ENCODE measurements at regions of chr1 and their contacts with region 1.

Region 1: DNA sequence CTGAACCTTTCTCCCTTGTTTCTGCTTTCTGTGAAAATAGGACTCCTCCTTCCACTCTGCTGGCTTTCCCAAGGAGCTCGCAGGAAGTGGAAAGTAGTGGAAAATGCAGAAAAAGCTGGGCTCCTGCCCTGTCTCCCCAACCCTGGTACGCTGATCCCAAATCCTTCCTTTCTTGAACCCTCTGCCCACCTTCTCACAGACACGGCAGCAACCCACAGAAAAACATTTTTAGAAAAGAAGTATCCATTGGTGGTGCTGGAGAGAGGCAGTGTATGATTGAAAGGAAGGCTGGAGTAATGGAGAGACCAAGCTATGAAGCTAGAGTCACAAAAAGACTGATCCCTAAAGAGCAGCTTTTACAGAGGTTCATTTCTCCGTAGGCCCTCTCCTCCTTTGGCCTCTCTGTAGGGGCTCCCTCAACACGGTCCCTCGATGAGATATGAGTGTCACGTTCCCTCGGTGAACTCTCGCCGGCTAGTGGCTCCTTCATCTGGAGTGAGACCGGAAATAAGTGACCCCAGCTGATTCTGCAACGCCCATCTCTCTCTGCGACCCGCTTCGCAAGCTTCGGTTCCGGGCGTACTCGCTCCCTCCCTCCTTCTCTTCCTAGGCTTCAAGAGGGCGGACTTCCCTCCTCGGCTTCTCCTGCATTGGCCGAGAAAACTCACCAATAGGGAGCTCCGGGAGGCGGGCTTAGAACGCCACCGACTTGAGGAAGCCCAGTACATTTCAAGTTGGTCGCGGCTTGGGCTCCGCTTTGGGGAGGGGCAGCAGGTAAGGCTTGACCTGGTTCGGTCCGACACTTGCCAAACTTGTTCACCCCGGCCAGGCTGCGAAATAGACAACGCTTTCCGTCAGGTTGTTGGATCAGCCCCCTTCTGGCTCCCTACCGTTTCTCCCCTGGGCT is at the starts of genes ANKRD34A and POLR3GL:
- DNase-seq: peak; percentile 98
- H3K4me3 Mint-ChIP-seq: peak within 1 kb of the TSS; percentile 97
- H3K27ac Mint-ChIP-seq: peak within 1 kb of the TSS; percentile 84
- H3K4me1 Mint-ChIP-seq: peaks cover 35% of the 10 kb centered on the region
- H3K27me3 Mint-ChIP-seq: no peaks in the 10 kb centered on the region
- total RNA-seq, gene ANKRD34A: 3.7 to 4.3 TPM
- total RNA-seq, gene POLR3GL: 32.0 to 34.0 TPM

Region 2: DNA sequence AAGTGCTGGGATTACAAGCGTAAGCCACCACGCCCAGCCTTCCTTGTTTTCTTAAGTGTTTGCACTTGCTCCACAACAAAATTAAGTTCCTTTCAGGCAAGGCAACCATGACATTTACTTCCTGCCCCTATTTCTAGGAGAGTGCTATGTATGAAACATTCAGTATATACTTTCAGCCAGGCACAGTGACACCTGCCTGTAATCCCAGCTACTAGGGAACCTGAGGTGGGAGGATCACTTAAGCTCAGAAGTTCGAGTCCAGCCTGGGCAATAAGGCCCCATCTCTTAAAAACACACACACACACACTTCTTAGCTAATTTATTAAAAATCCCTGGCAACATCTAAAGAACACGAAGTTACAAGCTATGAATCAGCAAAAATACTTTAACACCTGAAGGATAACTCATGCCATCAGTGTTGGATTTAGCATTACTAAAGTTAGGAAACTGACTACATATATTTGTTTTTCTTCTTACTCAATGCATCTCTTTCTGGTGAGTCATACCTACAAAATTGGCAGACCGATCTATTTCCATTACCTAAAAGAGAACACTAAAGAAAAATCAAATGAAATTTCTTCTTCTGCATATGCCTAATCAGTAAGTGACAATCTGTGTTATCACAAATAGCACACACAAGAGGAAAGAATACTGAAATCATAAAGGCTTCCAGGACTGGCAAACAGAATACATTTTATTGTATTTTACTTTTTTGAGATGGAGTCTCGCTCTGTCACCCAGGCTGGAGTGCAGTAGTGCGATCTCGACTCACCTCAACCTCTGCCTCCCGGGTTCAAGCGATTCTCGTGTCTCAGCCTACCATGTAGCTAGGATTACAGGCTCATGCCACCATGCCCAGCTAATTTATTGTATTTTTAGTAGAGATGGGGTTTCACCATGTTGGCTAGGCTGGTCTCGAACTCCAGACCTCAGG is 181.8 kb before region 1 on chr1:
- CTCF ChIA-PET with region 1: no interaction called
- intact Hi-C with region 1: no loop called
- DNase-seq: no peak
- H3K4me3 Mint-ChIP-seq: no peak overlapping the region
- H3K27ac Mint-ChIP-seq: no peak overlapping the region
- H3K4me1 Mint-ChIP-seq: peaks cover 30% of the 10 kb centered on the region
- H3K27me3 Mint-ChIP-seq: no peaks in the 10 kb centered on the region

Region 3: DNA sequence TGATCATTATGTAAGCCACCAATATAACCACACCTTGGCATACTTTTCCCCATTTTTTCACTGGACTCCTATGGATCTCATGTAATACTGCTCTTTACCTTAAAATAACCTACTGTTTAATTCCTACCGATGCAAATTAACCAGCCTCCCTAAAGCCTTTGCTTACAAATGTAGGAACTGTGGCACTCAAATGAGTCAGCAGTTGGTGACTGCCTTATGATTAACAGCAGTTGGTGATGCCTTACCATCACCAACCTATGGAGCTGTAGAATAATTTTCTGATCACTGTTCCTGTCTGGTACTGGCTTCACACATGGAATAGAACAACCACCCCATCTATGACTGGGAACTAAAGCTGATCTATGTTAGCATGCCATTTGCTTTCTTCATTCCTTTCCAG is 126.6 kb before region 1 on chr1:
- CTCF ChIA-PET with region 1: no interaction called
- intact Hi-C with region 1: no loop called
- DNase-seq: no peak
- H3K4me3 Mint-ChIP-seq: no peak overlapping the region
- H3K27ac Mint-ChIP-seq: peak overlapping the region; percentile 30
- H3K4me1 Mint-ChIP-seq: no peaks in the 10 kb centered on the region
- H3K27me3 Mint-ChIP-seq: no peaks in the 10 kb centered on the region

Region 4: DNA sequence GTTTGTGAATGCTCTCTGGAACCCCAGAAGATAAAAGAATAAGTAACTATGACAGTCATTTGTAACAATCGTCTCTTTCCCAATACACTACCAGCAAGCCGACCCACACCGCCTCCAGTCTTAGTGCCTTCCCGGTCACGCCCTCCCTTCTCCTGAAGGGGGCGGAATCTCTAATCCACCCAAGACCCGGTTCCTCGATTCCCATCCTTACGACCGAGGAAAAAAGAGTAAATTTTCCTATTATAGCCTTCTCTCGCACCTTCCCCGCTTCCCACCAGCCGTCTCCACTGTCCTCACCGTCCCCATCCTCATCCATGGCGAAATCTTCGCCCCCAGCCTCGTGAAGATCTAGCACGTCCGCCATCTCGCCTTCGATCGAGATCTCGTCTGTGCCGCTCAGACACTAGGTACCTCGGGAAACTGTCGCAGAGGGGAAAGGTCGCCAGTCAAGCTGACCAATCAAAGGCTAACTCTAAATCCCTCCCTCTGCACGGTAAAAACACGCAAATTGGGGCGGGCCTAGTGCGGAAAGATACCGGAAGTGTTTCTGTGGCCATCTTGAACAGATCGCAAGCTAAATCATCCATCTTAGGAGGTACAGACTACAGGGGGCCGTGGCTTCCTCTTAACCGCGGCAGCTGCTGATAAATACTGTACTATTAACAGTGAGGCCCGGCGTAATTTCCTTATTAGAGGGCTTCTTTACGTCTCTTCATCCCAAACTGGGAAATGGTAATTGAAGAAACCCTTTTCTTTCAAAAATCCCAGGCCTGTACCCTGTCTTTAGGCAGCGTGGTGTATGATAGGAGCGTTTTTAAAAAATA is 37.0 kb before region 1 on chr1 and contains the start of gene RBM8A:
- CTCF ChIA-PET with region 1: interaction called, 14 read pairs
- intact Hi-C with region 1: loop called (anchors 1 kb)
- DNase-seq: peak; percentile 99
- H3K4me3 Mint-ChIP-seq: no peak within 1 kb of the TSS
- H3K27ac Mint-ChIP-seq: no peak within 1 kb of the TSS
- H3K4me1 Mint-ChIP-seq: peaks cover 14% of the 10 kb centered on the region
- H3K27me3 Mint-ChIP-seq: no peaks in the 10 kb centered on the region
- total RNA-seq, gene RBM8A: 241 to 242 TPM

Region 5: GRCh38 chr1:146007506-146008133 is 43.4 kb after region 1 on chr1:
- CTCF ChIA-PET with region 1: interaction called, 17 read pairs
- intact Hi-C with region 1: no loop called
- DNase-seq: no peak
- H3K4me3 Mint-ChIP-seq: no peak overlapping the region
- H3K27ac Mint-ChIP-seq: peak overlapping the region; percentile 93
- H3K4me1 Mint-ChIP-seq: peaks cover 38% of the 10 kb centered on the region
- H3K27me3 Mint-ChIP-seq: no peaks in the 10 kb centered on the region

Region 6: DNA sequence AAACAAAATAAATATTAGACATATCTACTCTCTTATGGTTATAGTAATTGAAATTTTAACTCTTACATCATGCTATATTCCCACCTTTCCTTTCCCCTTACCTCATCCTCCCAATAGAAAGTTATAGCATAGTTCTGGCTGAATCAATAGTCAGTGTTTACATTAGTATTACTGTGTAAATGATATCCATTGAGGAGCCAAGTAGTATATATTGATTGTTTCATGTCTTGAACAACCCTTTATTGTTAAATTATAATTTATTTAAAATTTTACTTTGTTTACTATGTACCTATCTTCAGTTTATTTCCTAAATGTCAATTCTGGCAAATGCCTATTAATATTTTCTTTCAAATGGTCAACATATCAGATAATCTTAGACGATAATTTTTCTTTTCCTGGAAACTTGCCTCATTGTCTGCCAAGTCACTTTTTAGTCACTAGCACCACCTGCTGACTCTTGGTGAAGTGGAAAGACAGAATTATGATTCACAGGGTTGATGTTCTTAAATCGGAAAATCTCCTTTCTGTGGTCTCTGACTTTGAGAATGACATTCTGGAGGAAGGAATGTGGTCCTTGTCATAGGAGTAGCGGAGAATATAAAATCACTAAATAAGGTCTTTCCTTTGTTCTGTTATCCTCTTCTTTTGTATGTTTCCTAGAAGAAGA is 48.6 kb after region 1 on chr1:
- CTCF ChIA-PET with region 1: interaction called, 17 read pairs
- intact Hi-C with region 1: no loop called
- DNase-seq: peak; percentile 84
- H3K4me3 Mint-ChIP-seq: no peak overlapping the region
- H3K27ac Mint-ChIP-seq: no peak overlapping the region
- H3K4me1 Mint-ChIP-seq: peaks cover 5% of the 10 kb centered on the region
- H3K27me3 Mint-ChIP-seq: peaks cover 7% of the 10 kb centered on the region

Region 7: GRCh38 chr1:146036965-146037646 is 72.9 kb after region 1 on chr1:
- CTCF ChIA-PET with region 1: interaction called, 3 read pairs
- intact Hi-C with region 1: loop called (anchors 1 kb)
- DNase-seq: peak; percentile 89
- H3K4me3 Mint-ChIP-seq: peak overlapping the region; percentile 99
- H3K27ac Mint-ChIP-seq: peak overlapping the region; percentile 99
- H3K4me1 Mint-ChIP-seq: peaks cover 37% of the 10 kb centered on the region
- H3K27me3 Mint-ChIP-seq: peaks cover 9% of the 10 kb centered on the region